PC-3 (cell line): ENCODE measurements at regions of chr2 and their contacts with region 1.

Region 1: GRCh38 chr2:240513549-240514287 is 44.1 kb downstream of the ANKMY1 start:
- DNase-seq: peak; percentile 74
- ATAC-seq: peak; percentile 99
- H3K4me3 ChIP-seq: no peak overlapping the region
- H3K27ac ChIP-seq: no peak overlapping the region
- H3K4me1 ChIP-seq: no peaks in the 10 kb centered on the region
- H3K27me3 ChIP-seq: no peaks in the 10 kb centered on the region
- CTCF ChIP-seq: peak; percentile 92

Region 2: GRCh38 chr2:239087046-239087710 is 1426.5 kb before region 1 on chr2:
- CTCF ChIA-PET with region 1: no interaction called
- POLR2A ChIA-PET with region 1: no interaction called
- intact Hi-C with region 1: no loop called
- DNase-seq: peak; percentile 27
- ATAC-seq: peak; percentile 56
- H3K4me3 ChIP-seq: no peak overlapping the region
- H3K27ac ChIP-seq: no peak overlapping the region
- H3K4me1 ChIP-seq: no peaks in the 10 kb centered on the region
- H3K27me3 ChIP-seq: no peaks in the 10 kb centered on the region
- CTCF ChIP-seq: no peak

Region 3: GRCh38 chr2:240499309-240500301 is 14.1 kb before region 1 on chr2:
- CTCF ChIA-PET with region 1: no interaction called
- POLR2A ChIA-PET with region 1: no interaction called
- intact Hi-C with region 1: no loop called
- DNase-seq: no peak
- ATAC-seq: no peak
- H3K4me3 ChIP-seq: no peak overlapping the region
- H3K27ac ChIP-seq: no peak overlapping the region
- H3K4me1 ChIP-seq: no peaks in the 10 kb centered on the region
- H3K27me3 ChIP-seq: no peaks in the 10 kb centered on the region
- CTCF ChIP-seq: no peak

Region 4: GRCh38 chr2:240560480-240561326 is 47.0 kb after region 1 on chr2:
- CTCF ChIA-PET with region 1: interaction called, 10 read pairs
- POLR2A ChIA-PET with region 1: no interaction called
- intact Hi-C with region 1: loop called (anchors 2 kb)
- DNase-seq: peak; percentile 96
- ATAC-seq: peak; percentile 75
- H3K4me3 ChIP-seq: peak overlapping the region; percentile 77
- H3K27ac ChIP-seq: peak overlapping the region; percentile 91
- H3K4me1 ChIP-seq: peaks cover 42% of the 10 kb centered on the region
- H3K27me3 ChIP-seq: no peaks in the 10 kb centered on the region
- CTCF ChIP-seq: peak; percentile 19; the same call in 1 of the 2 replicates

Region 5: DNA sequence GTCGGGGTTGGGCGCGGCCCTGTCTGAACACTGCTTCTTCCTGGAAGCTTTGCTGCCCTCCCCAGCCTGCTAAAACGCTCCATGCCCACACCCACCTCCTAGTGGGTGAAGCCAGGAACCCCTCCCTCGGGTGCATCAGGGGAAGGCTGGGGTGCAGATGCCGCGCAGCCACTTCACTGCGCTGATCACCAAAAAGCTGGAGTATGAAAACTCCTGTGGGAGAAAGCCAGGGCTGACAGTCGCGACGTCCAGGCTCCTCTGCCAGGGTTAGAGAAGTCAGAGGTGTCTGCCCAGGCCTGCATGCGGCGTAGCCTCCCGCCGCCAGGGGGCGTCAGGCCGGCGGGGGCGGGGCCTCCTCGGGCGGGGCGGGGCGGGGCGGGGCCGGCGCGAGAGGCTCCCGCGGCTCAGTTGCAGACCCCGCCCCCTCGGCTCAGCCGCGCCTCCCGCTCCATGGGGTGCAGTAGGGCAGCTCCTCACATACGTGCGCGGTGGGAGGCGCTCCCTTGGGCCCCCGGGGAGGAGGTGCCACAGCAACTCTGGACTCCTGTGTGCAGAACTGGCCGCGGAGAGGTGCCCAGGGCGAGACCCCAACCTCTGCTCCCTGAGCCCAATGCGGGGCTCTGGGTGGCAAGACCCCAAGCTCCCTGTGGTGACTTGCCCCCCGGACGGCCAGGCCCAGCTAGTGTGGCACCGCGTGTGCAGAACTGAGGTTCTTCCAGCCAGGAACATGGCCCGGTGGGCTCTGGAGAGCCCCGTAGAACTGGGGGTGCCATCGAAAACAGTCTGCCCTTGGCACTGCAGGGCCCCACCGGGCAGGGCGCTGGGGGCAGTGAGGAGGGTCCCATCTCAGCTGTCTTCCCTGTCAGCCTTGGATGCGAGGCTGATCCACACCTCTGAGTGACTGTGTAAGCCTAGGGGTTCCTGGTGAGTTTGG is 52.8 kb after region 1 on chr2:
- CTCF ChIA-PET with region 1: interaction called, 10 read pairs
- POLR2A ChIA-PET with region 1: no interaction called
- intact Hi-C with region 1: loop called (anchors 2 kb)
- DNase-seq: peak; percentile 81
- ATAC-seq: peak; percentile 60
- H3K4me3 ChIP-seq: peak overlapping the region; percentile 78
- H3K27ac ChIP-seq: peak overlapping the region; percentile 92
- H3K4me1 ChIP-seq: peaks cover 56% of the 10 kb centered on the region
- H3K27me3 ChIP-seq: no peaks in the 10 kb centered on the region
- CTCF ChIP-seq: peak; percentile 61

Region 6: GRCh38 chr2:240579771-240580614 is 66.3 kb after region 1 on chr2:
- CTCF ChIA-PET with region 1: interaction called, 10 read pairs
- POLR2A ChIA-PET with region 1: no interaction called
- intact Hi-C with region 1: no loop called
- DNase-seq: peak; percentile 93
- ATAC-seq: peak; percentile 92
- H3K4me3 ChIP-seq: peak overlapping the region; percentile 48; the same call in 1 of the 2 replicates
- H3K27ac ChIP-seq: peak overlapping the region; percentile 91
- H3K4me1 ChIP-seq: peaks cover 52% of the 10 kb centered on the region
- H3K27me3 ChIP-seq: no peaks in the 10 kb centered on the region
- CTCF ChIP-seq: peak; percentile 57

Region 7: GRCh38 chr2:240840435-240841080 is 326.8 kb after region 1 on chr2:
- CTCF ChIA-PET with region 1: interaction called, 7 read pairs
- POLR2A ChIA-PET with region 1: no interaction called
- intact Hi-C with region 1: loop called (anchors 2 kb)
- DNase-seq: peak; percentile 73
- ATAC-seq: peak; percentile 96
- H3K4me3 ChIP-seq: no peak overlapping the region
- H3K27ac ChIP-seq: no peak overlapping the region
- H3K4me1 ChIP-seq: no peaks in the 10 kb centered on the region; the same call in 1 of the 2 replicates
- H3K27me3 ChIP-seq: peaks cover 29% of the 10 kb centered on the region
- CTCF ChIP-seq: peak; percentile 69